Sigmoid colon (tissue), 7 donors: ENCODE measurements at regions of chr12 and their contacts with region 1.

Region 1: DNA sequence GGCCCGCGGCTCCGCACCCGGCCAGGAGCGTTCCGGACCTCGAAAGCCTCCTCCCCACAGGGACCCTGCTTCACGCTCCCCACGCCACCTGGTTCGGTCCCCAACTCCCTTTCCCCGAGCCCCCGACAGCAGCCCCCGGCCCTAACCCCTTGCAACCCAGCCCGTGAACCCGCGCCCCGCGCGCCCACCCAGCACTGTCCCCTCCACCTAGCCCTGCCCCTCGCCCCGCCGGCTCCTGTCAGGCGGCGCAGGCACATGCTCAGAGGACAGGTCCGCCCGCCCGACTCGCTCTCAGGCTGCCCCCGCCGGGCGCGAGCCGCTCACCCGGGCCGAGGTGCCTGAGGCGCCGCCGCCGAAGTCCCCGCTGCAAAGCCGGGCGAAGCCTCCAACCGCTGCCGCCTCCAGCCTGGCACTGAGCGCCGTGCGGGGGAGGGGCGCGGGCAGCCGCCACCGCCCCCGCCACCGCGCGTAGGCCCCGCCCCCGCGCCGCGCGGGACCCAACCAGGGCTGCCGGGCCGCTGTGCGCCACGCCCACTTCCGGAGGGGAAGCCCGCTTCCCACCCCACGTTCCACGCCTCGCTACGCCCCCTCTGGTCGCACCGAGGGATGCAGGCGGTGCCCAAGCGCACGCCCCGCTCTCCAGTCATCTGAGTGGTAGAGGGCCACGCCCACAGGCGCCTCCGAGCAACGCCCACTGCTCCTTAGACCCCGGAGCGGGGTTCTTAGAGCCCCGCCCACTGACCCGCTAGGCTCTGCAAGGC is at the start of gene CORO1C:
- DNase-seq: peak; percentile 98
- H3K4me3 ChIP-seq: peak within 1 kb of the TSS; percentile 98 to 100 (median 99)
- H3K27ac ChIP-seq: peak within 1 kb of the TSS; percentile 99 to 100 (median 100)
- H3K4me1 ChIP-seq: peaks cover 0 to 47% (median 30%) of the 10 kb centered on the region in 4 donors
- H3K27me3 ChIP-seq: no peaks in the 10 kb centered on the region
- CTCF ChIP-seq: peak in 3 of 4 experiments; percentile 75 to 90 (median 78)
- EP300 ChIP-seq: no peak
- POLR2A ChIP-seq: peak in 1 of 2 donors; percentile 82
- total RNA-seq, gene CORO1C: 247 to 569 (median 360) TPM

Region 2: DNA sequence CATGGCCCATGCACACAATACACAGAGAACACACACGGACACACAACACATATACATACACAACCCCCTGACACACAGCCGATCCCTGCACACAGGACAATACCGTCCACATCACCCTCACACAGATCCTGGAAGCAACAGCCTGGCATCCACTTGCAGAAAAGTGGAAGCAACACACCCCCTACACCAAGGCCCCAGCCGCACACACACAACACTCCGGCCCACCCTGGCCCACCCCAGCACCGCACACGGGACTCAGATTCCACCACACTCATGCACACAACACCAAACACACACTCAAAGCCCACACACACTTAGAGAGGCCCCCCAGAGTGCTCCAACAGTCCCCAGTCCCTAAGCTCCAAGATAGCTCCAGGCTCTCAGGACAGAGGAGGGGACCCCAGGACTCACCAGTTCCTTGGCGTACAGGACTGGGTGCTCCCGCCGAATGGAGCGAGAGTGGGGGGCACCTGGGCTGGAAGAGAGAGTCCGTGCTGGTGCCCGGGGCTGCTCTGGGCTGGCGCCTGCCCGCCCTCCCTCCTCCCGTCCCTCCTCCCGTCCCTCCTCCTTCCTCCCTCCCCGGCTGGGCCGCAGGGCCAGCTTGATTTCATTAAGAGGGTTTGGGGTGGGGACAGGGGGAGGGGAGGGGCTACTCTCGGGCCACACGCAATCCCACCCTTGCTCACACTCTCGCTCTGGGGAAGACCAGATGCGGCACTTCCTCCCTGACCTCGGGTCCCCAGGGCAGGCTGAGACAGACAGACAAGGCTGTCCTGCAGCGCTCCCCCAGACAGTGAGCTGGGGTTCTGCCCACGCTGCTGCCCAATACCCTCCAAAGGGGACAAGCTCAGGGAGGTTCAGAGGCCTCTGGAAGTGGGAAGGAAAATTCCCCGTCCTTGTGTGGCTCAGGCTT is 133.5 kb before region 1 on chr12 and contains the start of gene TMEM119:
- intact Hi-C with region 1: no loop called
- DNase-seq: peak; percentile 76
- H3K4me3 ChIP-seq: peak within 1 kb of the TSS in 3 of 4 donors; percentile 21 to 32 (median 30)
- H3K27ac ChIP-seq: peak within 1 kb of the TSS in 2 of 4 donors; percentile 12 to 31
- H3K4me1 ChIP-seq: no peaks in the 10 kb centered on the region
- H3K27me3 ChIP-seq: no peaks in the 10 kb centered on the region
- CTCF ChIP-seq: no peak
- EP300 ChIP-seq: no peak
- POLR2A ChIP-seq: no peak
- total RNA-seq, gene TMEM119: 0.95 to 11.6 (median 6.7) TPM

Region 3: GRCh38 chr12:108664338-108665258 is 66.7 kb before region 1 on chr12:
- intact Hi-C with region 1: loop called (anchors 2 kb)
- DNase-seq: peak; percentile 97
- H3K4me3 ChIP-seq: no peak overlapping the region
- H3K27ac ChIP-seq: peak overlapping the region; percentile 83 to 99 (median 86)
- H3K4me1 ChIP-seq: peaks cover 0 to 82% (median 80%) of the 10 kb centered on the region in 4 donors
- H3K27me3 ChIP-seq: no peaks in the 10 kb centered on the region
- CTCF ChIP-seq: peak; percentile 88 to 96 (median 92)
- EP300 ChIP-seq: peak in 1 of 4 donors; percentile 19
- POLR2A ChIP-seq: no peak

Region 4: GRCh38 chr12:108691175-108691997 is 39.9 kb before region 1 on chr12:
- intact Hi-C with region 1: loop called (anchors 2 kb)
- DNase-seq: peak; percentile 99
- H3K4me3 ChIP-seq: peak overlapping the region in 3 of 4 donors; percentile 9 to 30 (median 23)
- H3K27ac ChIP-seq: peak overlapping the region; percentile 95 to 100 (median 98)
- H3K4me1 ChIP-seq: peaks cover 0 to 95% (median 90%) of the 10 kb centered on the region in 4 donors
- H3K27me3 ChIP-seq: no peaks in the 10 kb centered on the region
- CTCF ChIP-seq: peak in 3 of 4 experiments; percentile 38 to 76 (median 70)
- EP300 ChIP-seq: peak; percentile 66 to 94 (median 83)
- POLR2A ChIP-seq: peak; percentile 25 to 30

Region 5: GRCh38 chr12:108773798-108774788 is 42.8 kb after region 1 on chr12:
- intact Hi-C with region 1: loop called (anchors 5 kb)
- DNase-seq: peak; percentile 96
- H3K4me3 ChIP-seq: peak overlapping the region in 1 of 4 donors; percentile 18
- H3K27ac ChIP-seq: peak overlapping the region; percentile 71 to 91 (median 86)
- H3K4me1 ChIP-seq: peaks cover 0 to 52% (median 42%) of the 10 kb centered on the region in 4 donors
- H3K27me3 ChIP-seq: no peaks in the 10 kb centered on the region
- CTCF ChIP-seq: no peak
- EP300 ChIP-seq: peak; percentile 92 to 99 (median 95)
- POLR2A ChIP-seq: no peak

Region 6: DNA sequence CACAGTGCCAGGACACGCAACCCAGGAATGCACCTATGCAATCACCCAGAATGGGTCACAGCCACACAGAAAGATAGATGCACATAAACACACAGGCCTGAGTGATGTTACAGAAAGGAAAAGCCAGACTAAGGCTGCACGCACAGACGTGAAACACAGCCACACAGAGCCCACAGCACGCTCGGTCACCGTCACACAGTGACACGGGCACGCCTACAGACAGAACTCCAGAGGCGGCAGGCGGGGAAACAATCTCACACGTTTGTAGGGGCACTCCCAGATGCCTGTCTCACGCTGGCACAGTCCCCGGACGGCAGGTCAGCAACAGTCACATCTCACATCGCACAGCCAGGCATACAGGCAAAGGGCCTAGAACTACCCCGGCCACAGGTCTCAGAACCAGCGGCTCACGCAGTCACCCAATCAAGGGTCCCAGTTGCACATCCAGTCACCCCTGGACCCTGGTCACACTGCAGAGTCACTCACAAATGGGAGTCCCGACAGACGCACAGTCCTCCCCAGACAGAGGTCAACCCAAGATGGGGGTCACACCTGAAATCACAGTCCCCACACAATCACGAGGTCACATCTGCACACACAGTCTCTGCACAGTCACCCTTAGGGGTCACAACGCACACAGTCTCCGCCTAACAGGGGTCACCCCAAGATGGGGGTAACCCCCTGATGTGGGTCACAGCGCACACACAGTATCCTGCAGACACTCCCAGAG is 125.3 kb after region 1 on chr12:
- intact Hi-C with region 1: loop called (anchors 2 kb)
- DNase-seq: peak; percentile 87
- H3K4me3 ChIP-seq: peak overlapping the region; percentile 63 to 84 (median 78)
- H3K27ac ChIP-seq: peak overlapping the region; percentile 91 to 99 (median 96)
- H3K4me1 ChIP-seq: peaks cover 0 to 63% (median 55%) of the 10 kb centered on the region in 4 donors
- H3K27me3 ChIP-seq: no peaks in the 10 kb centered on the region
- CTCF ChIP-seq: no peak
- EP300 ChIP-seq: no peak
- POLR2A ChIP-seq: peak in 1 of 2 donors; percentile 22

Region 7: GRCh38 chr12:109147954-109148353 is 416.7 kb after region 1 on chr12:
- intact Hi-C with region 1: no loop called
- DNase-seq: peak; percentile 89
- H3K4me3 ChIP-seq: no peak overlapping the region
- H3K27ac ChIP-seq: peak overlapping the region; percentile 56 to 80 (median 74)
- H3K4me1 ChIP-seq: peaks cover 0 to 42% (median 38%) of the 10 kb centered on the region in 4 donors
- H3K27me3 ChIP-seq: no peaks in the 10 kb centered on the region
- CTCF ChIP-seq: no peak
- EP300 ChIP-seq: peak in 3 of 4 donors; percentile 22 to 69 (median 58)
- POLR2A ChIP-seq: no peak